ENCODE measurements at regions of chr18 and their contacts with region 1.

Region 1: DNA sequence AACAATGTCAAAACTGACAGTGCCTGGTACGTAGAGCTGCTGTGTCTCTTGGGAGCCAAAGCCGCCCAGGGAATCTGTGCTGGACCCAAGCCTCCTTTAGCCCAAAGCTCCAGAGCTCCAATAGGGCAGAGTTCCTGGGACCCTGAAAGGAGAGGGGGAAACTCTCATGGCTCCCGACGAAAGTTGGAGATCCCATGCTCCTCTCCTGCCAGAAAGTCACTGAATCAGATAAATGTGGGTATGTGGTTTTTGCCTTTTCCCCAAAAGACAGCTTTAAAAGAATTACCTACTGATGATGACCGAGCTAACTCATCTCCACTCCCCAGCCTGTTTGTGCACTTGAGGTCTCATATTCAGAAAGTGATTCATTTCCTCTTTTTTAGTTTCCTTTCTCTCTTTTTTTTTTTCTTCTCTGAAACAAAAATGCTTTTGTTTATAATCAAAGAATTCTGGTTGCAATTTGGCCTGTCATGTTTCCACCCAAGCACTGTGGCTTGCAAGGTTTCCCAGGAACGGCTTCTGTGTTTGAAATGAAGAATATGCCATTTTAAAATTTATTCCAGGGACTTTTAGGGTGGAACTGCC is 14.1 kb upstream of the PMAIP1 start:
- DNase-seq: peak; percentile 38
- ATAC-seq: peak; percentile 79
- H3K4me3 Mint-ChIP-seq: peak overlapping the region; percentile 70
- H3K27ac Mint-ChIP-seq: peak overlapping the region; percentile 82
- H3K4me1 Mint-ChIP-seq: peaks cover 53% of the 10 kb centered on the region
- H3K27me3 Mint-ChIP-seq: no peaks in the 10 kb centered on the region
- CTCF ChIP-seq: no peak

Region 2: DNA sequence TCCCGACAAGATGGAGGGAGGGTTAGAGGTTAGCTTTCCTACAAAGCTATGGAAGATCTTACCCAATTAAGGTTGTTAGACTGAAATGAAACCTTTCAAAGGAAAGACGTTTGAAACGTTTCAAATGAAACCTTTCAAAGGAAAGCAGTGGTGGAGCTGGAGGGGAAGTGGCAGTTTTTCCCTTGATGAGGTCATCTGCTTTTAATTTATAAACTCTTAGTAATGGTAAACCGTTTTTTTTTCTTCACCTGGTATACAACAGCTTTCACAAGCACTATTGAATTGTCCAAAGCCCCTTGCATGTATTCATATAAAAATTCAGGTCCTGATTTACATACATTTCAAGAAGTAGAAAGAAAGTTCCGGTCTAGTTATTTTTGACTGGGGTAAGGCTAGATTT is 21.5 kb after region 1 on chr18:
- CTCF ChIA-PET with region 1: no interaction called
- POLR2A ChIA-PET with region 1: interaction called, 13 read pairs
- intact Hi-C with region 1: no loop called
- DNase-seq: no peak
- ATAC-seq: peak; percentile 19
- H3K4me3 Mint-ChIP-seq: peak overlapping the region; percentile 68
- H3K27ac Mint-ChIP-seq: peak overlapping the region; percentile 76
- H3K4me1 Mint-ChIP-seq: peaks cover 70% of the 10 kb centered on the region
- H3K27me3 Mint-ChIP-seq: no peaks in the 10 kb centered on the region
- CTCF ChIP-seq: no peak